ENCODE measurements at regions of chr7 and their contacts with region 1.

Region 1: GRCh38 chr7:2566890-2567678 is 8.3 kb downstream of the IQCE start:
- DNase-seq: no peak
- ATAC-seq: 0 out of 2 replicates have a peak, but pooled peaks have one; percentile 19
- H3K4me3 ChIP-seq: no peak overlapping the region
- H3K27ac ChIP-seq: no peak overlapping the region
- H3K4me1 ChIP-seq: peaks cover 6% of the 10 kb centered on the region; the same call in 1 of the 2 replicates
- H3K27me3 ChIP-seq: no peaks in the 10 kb centered on the region
- CTCF ChIP-seq: no peak

Region 2: DNA sequence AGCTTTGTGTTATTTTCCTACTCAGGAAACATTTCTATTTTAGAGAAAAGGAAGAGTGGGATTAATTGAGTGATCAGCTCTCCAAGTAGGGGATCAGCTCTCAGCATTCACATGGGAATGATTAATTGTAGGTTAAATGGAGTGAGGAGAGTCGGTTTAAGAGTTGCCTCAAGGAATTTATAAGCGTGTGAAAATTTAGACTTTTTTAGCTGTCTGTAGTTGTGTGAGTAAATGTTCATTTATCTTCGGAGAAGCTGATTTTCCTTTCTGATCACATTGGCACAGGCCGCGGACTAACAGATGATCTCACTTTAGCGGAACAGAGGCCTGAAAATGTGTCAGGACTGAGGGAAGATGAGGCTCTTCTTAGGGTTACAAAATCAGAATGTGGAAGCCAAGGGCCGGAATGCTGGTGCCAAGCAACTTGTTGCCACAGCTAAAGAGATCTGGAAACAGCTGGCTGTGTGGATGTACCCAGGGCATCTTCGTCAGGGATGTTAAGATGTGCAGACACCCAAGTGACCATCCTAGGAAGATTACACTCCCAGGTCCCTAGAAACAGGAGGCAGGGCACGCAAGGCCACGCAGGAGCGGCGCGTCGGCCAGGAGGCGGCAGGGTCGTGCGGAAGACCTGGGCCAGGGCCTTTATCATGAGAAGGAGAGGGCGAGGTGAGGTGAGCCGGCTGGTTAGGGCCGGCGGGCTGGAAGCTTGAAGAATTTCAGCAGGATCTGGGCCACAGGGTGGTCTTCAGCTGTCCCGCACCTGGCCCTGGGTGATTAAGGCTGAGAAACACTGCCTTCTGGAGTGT is 29.6 kb after region 1 on chr7:
- CTCF ChIA-PET with region 1: interaction called, 4 read pairs
- POLR2A ChIA-PET with region 1: interaction called, 10 read pairs
- in situ Hi-C with region 1: no loop called
- intact Hi-C with region 1: no loop called
- DNase-seq: no peak
- ATAC-seq: no peak
- H3K4me3 ChIP-seq: no peak overlapping the region
- H3K27ac ChIP-seq: no peak overlapping the region
- H3K4me1 ChIP-seq: no peaks in the 10 kb centered on the region
- H3K27me3 ChIP-seq: no peaks in the 10 kb centered on the region
- CTCF ChIP-seq: no peak

Region 3: DNA sequence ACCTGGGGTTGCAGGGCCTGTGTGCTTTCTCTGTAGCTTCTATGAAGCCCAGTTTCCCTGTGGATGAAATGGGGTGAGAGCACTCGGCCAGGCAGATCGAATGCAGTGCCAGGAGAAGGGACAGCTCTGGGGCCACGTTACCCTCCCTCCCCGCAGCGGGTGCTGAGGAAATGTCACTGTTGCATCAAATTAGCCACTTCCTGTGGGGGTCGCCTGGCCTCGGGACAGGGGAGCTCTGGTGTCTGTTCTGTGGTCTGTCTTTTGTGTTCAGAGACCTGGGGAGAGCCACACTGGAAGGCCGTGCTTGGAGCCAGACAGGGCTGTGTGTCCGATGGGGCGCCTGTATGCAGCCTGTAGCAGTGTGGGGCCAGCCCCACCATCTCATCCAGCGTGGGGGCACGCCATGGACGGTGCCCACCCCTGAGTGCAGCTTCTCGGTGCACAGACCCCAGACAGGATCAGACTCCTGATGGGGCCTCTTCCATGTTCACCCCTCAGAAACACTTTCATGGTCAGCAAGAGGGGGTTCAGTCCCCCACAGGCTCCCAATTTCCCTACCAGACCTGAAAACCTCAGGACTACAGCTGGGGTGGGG is 78.3 kb after region 1 on chr7:
- CTCF ChIA-PET with region 1: no interaction called
- POLR2A ChIA-PET with region 1: no interaction called
- in situ Hi-C with region 1: no loop called
- intact Hi-C with region 1: no loop called
- DNase-seq: no peak
- ATAC-seq: no peak
- H3K4me3 ChIP-seq: no peak overlapping the region
- H3K27ac ChIP-seq: peak overlapping the region; percentile 83
- H3K4me1 ChIP-seq: peaks cover 53% of the 10 kb centered on the region
- H3K27me3 ChIP-seq: no peaks in the 10 kb centered on the region
- CTCF ChIP-seq: no peak